ENCODE measurements at regions of chr10 and their contacts with region 1.

Region 1: DNA sequence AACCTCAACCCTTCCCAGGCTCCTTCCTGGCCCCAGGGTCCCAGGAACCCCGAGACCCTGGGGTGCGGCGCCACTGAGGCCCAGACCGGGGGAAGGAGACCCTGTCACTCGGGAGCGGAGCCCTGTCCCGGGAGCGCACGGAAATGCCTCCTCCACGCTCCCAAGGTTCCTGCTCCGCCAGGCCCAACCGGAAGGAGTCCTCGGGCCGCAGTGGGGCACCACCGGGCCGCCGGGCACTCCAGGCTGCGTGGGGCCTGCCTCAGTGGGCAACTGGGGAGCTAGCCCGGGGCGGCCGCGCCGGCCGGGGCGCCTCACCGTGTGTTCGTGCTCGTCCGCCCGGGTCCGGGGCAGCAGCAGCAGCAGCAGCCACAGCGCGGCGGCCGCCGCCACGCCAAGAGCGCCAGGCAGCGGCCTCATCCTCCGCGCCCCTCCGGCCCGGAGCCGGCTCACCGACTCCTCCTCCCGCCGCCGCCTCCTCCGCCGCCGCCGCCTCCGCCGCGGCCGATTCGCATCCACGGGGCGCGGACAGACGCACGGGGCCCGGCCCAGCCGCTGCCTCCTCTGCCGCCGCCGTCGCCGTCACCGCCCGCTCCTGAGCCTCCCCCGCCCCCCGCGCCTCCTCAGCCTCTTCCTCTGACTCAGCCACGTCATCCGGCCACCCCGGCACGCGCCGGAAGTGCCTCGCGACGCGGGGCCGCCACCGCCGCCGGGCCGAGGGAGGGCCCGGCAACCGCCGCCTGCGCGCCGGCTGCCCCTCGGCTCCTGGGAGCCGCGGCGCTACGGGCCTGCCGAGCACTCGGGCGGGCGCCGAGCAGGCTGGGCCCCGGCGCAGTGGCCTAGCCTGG is at the start of gene TM9SF3:
- DNase-seq: peak; percentile 86
- H3K4me3 Mint-ChIP-seq: peak within 1 kb of the TSS; percentile 96
- H3K27ac Mint-ChIP-seq: peak within 1 kb of the TSS; percentile 89
- H3K4me1 Mint-ChIP-seq: peaks cover 43% of the 10 kb centered on the region
- H3K27me3 Mint-ChIP-seq: peaks cover 9% of the 10 kb centered on the region
- total RNA-seq, gene TM9SF3: 81.7 and 87.7 TPM in 2 replicates

Region 2: DNA sequence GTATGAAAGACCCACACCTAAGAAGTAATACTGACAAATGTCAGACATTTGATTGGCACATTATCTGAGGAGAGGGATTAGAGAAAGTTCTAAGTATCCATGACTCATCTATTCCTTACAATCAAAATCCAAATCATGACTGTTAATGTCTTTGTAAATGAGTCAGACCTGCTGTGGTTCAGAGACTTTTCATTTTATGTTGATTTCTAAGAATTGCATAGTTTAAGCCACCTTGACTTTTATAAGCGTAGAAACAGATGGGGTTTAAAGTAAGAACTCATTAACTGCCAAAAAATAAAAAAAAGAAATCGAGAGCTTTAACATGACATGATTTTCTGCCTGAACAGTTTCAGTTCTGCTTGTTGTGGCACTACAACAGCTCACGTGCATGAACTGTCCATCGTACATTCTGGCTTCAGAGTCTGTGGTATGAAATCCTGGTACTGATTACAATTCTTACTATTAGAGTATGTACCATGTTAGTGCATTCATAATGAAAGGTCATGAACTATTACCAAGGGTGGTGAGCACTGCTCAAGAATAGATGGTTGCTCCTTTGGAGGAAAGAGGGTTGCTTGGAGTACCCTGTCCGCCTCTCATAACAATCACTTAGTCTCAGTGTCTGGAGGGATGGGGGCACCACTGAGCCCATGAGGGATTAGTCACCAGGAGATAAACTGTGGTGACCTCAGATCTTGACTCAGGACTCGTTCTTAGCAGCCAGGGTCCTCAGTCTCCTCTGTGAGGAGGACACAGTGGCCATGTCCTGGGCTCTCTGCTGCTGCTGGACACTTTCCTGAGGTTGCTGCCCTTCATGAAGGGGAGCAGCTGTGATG is 1350.4 kb before region 1 on chr10:
- intact Hi-C with region 1: loop called (anchors 5 kb)
- DNase-seq: no peak
- H3K4me3 Mint-ChIP-seq: peak overlapping the region; percentile 46
- H3K27ac Mint-ChIP-seq: peak overlapping the region; percentile 89
- H3K4me1 Mint-ChIP-seq: peaks cover 26% of the 10 kb centered on the region
- H3K27me3 Mint-ChIP-seq: peaks cover 3% of the 10 kb centered on the region

Region 3: DNA sequence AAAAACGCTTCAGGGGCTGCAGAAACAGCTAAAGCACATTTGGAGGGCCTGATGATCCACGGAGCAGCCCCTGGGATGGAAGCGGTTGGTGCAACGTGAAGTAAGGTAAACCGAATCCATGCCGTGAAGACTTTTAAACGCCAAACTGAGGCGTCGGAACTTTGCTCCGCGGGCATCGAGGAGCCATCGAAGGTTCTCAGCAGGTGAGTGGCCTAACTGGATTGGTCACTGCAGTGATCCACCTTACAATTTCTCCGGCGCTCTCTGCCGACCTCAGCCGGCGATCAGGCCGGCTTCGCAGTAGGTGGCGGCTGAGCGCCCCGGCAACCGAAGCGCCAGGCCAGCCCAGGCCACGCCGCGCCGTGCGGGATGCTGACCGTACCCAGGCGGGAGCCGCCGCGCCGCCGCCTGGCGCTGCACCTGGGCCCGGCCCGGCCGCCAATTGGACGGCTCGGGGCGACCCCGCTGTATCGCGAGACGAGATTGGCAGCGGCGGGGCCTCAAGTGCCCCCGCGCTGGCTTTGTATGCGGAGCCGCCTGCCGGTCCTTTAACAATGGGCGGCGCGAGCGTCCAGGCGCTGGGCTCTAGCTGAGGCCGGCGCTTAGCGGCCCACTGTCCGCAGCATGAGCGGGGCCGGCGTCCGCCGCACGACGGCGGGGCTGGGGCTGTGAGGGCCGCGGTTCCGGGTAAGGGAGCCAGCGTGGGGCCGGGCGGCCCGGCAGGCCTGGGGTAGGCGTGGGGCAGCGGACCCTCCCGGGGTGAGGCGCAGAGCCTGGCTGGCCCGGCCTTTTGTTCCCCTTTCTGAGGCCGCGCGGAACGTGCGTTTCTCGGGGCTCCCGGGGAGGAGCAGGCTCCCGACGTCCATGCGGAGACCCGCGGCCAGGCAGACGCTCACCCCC is 543.4 kb before region 1 on chr10 and contains the start of gene CCNJ:
- intact Hi-C with region 1: loop called (anchors 5 kb)
- DNase-seq: peak; percentile 79
- H3K4me3 Mint-ChIP-seq: peak within 1 kb of the TSS; percentile 92
- H3K27ac Mint-ChIP-seq: peak within 1 kb of the TSS; percentile 83
- H3K4me1 Mint-ChIP-seq: peaks cover 42% of the 10 kb centered on the region
- H3K27me3 Mint-ChIP-seq: peaks cover 2% of the 10 kb centered on the region
- total RNA-seq, gene CCNJ: 9.7 and 10.2 TPM in 2 replicates

Region 4: GRCh38 chr10:96565774-96566173 is 20.9 kb before region 1 on chr10:
- intact Hi-C with region 1: loop called (anchors 1 kb)
- DNase-seq: no peak
- H3K4me3 Mint-ChIP-seq: no peak overlapping the region
- H3K27ac Mint-ChIP-seq: no peak overlapping the region
- H3K4me1 Mint-ChIP-seq: peaks cover 21% of the 10 kb centered on the region
- H3K27me3 Mint-ChIP-seq: no peaks in the 10 kb centered on the region

Region 5: GRCh38 chr10:96978621-96979154 is 392.0 kb after region 1 on chr10:
- intact Hi-C with region 1: loop called (anchors 1 kb)
- DNase-seq: no peak
- H3K4me3 Mint-ChIP-seq: peak overlapping the region; percentile 62
- H3K27ac Mint-ChIP-seq: peak overlapping the region; percentile 88
- H3K4me1 Mint-ChIP-seq: peaks cover 25% of the 10 kb centered on the region
- H3K27me3 Mint-ChIP-seq: no peaks in the 10 kb centered on the region

Region 6: DNA sequence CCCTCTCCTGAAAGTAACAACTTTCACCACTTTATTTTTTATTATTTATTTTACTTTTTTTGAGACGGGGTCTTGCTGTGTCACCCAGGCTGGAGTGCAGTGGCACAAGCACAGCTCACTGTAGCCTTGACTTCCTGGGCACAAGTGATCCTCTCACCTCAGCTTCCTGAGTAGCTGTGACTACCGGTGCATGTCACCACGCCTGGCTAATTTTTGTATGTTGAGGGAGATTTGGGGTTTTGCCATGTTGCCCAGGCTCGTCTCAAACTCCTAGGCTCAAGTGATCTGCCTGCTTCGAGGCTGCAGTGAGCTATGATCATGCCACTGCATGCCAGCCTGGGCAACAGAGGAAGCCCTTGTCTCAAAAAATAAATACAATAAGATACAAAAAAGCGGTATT is 614.0 kb after region 1 on chr10:
- intact Hi-C with region 1: no loop called
- DNase-seq: no peak
- H3K4me3 Mint-ChIP-seq: no peak overlapping the region
- H3K27ac Mint-ChIP-seq: no peak overlapping the region
- H3K4me1 Mint-ChIP-seq: peaks cover 11% of the 10 kb centered on the region
- H3K27me3 Mint-ChIP-seq: peaks cover 48% of the 10 kb centered on the region

Region 7: DNA sequence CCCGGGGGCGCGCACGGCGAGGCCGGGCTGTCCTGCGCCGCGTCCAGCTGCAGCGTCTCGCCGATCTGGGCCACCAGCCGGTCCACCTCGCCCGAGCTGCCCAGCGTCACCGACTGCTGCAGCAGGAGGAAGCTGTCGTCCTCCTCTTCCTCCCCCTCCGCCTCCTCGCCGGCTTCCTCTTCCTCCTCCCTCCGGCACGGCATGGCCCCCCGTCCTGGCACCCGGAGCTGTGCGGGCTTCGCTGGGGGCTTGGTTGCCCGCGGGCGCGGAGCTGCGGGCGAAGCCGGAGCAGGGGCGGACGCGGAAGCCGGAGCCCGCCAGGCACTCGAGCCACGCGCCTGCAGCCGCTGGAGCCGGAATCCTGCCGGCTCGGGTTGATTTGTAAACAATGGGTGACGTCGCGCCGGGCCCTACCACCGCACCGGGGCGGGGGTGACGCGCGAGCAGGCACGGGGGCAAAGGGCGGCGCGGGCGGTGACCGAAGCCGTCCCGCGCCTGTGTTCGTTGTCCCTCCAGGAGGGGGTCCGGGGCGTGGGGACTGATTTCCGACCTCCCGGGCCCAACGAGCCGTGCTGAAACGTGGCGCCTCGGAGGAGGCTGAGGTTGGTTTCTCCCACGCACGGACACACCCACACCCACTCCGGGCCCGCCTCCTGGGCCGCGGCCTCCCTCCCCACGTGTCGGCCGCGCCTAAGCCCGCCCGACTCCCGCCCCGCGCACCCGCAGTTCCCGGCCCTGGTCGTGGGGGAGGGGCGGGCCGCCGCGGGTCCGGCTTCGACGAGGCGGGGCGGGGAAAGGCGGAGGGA is 747.9 kb after region 1 on chr10 and contains the start of gene FRAT2:
- intact Hi-C with region 1: loop called (anchors 5 kb)
- DNase-seq: peak; percentile 83
- H3K4me3 Mint-ChIP-seq: peak within 1 kb of the TSS; percentile 86
- H3K27ac Mint-ChIP-seq: peak within 1 kb of the TSS; percentile 75
- H3K4me1 Mint-ChIP-seq: peaks cover 34% of the 10 kb centered on the region
- H3K27me3 Mint-ChIP-seq: peaks cover 24% of the 10 kb centered on the region
- total RNA-seq, gene FRAT2: 10.8 and 11.2 TPM in 2 replicates

Region 8: GRCh38 chr10:97640174-97640867 is 1053.7 kb after region 1 on chr10 and contains the start of gene PI4K2A:
- intact Hi-C with region 1: loop called (anchors 1 kb)
- DNase-seq: peak; percentile 99
- H3K4me3 Mint-ChIP-seq: peak within 1 kb of the TSS; percentile 96
- H3K27ac Mint-ChIP-seq: peak within 1 kb of the TSS; percentile 86
- H3K4me1 Mint-ChIP-seq: peaks cover 23% of the 10 kb centered on the region
- H3K27me3 Mint-ChIP-seq: peaks cover 1% of the 10 kb centered on the region
- total RNA-seq, gene PI4K2A: 19.3 and 19.7 TPM in 2 replicates